HepG2 (cell line): ENCODE measurements at regions of chr14 and their contacts with region 1.

Region 1: GRCh38 chr14:79680087-79680820 is 531.0 kb downstream of the DIO2 start:
- DNase-seq: no peak
- ATAC-seq: no peak
- H3K4me3 ChIP-seq: no peak overlapping the region
- H3K27ac ChIP-seq: no peak overlapping the region
- H3K4me1 ChIP-seq: no peaks in the 10 kb centered on the region
- H3K27me3 ChIP-seq: no peaks in the 10 kb centered on the region
- CTCF ChIP-seq: no peak
- EP300 ChIP-seq: no peak
- POLR2A ChIP-seq: no peak
- RAD21 ChIP-seq: no peak

Region 2: DNA sequence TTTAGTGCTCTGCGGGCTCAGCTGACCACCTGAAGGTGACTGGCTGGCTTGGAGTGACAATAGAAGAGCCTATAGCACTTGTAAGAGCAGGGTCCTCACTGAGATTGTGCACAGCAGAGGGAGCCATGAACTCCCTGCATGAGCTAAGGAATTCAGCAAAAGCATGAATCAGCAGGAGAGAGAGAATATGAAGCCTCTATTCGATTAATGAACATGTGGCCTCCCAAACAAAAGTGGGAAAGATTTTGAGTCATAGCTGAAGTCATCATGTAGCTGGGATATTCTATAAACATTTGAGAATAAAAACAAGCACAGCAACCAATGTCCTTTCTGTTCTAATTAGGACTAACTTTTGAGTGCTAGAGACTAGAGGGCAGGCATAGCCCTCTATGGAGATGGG is 95.6 kb before region 1 on chr14:
- CTCF ChIA-PET with region 1: no interaction called
- POLR2A ChIA-PET with region 1: no interaction called
- in situ Hi-C with region 1: loop called (anchors 25 kb)
- intact Hi-C with region 1: no loop called
- DNase-seq: no peak
- ATAC-seq: no peak
- H3K4me3 ChIP-seq: no peak overlapping the region
- H3K27ac ChIP-seq: no peak overlapping the region
- H3K4me1 ChIP-seq: no peaks in the 10 kb centered on the region
- H3K27me3 ChIP-seq: no peaks in the 10 kb centered on the region; a peak in 1 of 5 replicates
- CTCF ChIP-seq: no peak
- EP300 ChIP-seq: no peak
- POLR2A ChIP-seq: no peak
- RAD21 ChIP-seq: no peak